ENCODE measurements at regions of chr3 and their contacts with region 1.

Region 1: GRCh38 chr3:123559040-123559861 is 25.6 kb downstream of the HACD2 start:
- DNase-seq: no peak
- ATAC-seq: peak; percentile 60
- H3K4me3 ChIP-seq: no peak overlapping the region
- H3K27ac ChIP-seq: no peak overlapping the region
- H3K4me1 ChIP-seq: no peaks in the 10 kb centered on the region
- H3K27me3 ChIP-seq: no peaks in the 10 kb centered on the region
- CTCF ChIP-seq: peak; percentile 63 to 78 (median 70); a peak in 5 of 6 replicates
- EP300 ChIP-seq: no peak
- POLR2A ChIP-seq: no peak
- RAD21 ChIP-seq: peak; percentile 83

Region 2: GRCh38 chr3:123449102-123449996 is 109.9 kb before region 1 on chr3:
- CTCF ChIA-PET with region 1: no interaction called
- POLR2A ChIA-PET with region 1: no interaction called
- RAD21 ChIA-PET with region 1: no interaction called
- SMC1A ChIA-PET with region 1: interaction called, 3 read pairs
- in situ Hi-C with region 1: no loop called
- intact Hi-C with region 1: loop called (anchors 5 kb)
- DNase-seq: no peak
- ATAC-seq: peak; percentile 40; the same call in 2 of the 3 replicates
- H3K4me3 ChIP-seq: peak overlapping the region; percentile 36; the same call in 1 of the 2 replicates
- H3K27ac ChIP-seq: no peak overlapping the region
- H3K4me1 ChIP-seq: no peaks in the 10 kb centered on the region
- H3K27me3 ChIP-seq: peaks cover 1 to 14% of the 10 kb centered on the region in 2 experiments
- CTCF ChIP-seq: no peak
- EP300 ChIP-seq: no peak
- POLR2A ChIP-seq: no peak
- RAD21 ChIP-seq: no peak

Region 3: DNA sequence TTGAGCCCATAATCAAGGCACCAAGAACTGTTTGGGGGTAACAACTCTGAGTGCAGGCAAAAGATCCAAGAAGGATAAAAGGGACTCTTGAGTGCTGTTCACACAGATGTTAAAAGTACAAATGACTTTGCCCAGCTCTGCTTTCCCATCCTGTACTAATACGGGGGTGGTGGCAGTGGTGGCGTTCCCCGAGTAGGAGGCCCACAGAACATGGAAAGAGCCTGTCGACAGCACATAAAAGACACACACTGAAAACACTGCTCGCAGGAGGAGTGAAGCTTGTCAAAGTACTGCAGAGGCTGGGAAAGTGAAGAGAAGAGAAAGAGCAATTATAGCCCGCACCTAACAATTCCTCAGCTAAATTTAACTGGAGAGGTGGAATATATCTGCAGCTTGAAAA is 15.3 kb before region 1 on chr3:
- CTCF ChIA-PET with region 1: interaction called, 23 read pairs
- POLR2A ChIA-PET with region 1: no interaction called
- RAD21 ChIA-PET with region 1: no interaction called
- SMC1A ChIA-PET with region 1: interaction called, 14 read pairs
- in situ Hi-C with region 1: no loop called
- intact Hi-C with region 1: no loop called
- DNase-seq: no peak
- ATAC-seq: no peak
- H3K4me3 ChIP-seq: no peak overlapping the region
- H3K27ac ChIP-seq: no peak overlapping the region
- H3K4me1 ChIP-seq: no peaks in the 10 kb centered on the region
- H3K27me3 ChIP-seq: no peaks in the 10 kb centered on the region
- CTCF ChIP-seq: no peak
- EP300 ChIP-seq: no peak
- POLR2A ChIP-seq: no peak
- RAD21 ChIP-seq: no peak

Region 4: DNA sequence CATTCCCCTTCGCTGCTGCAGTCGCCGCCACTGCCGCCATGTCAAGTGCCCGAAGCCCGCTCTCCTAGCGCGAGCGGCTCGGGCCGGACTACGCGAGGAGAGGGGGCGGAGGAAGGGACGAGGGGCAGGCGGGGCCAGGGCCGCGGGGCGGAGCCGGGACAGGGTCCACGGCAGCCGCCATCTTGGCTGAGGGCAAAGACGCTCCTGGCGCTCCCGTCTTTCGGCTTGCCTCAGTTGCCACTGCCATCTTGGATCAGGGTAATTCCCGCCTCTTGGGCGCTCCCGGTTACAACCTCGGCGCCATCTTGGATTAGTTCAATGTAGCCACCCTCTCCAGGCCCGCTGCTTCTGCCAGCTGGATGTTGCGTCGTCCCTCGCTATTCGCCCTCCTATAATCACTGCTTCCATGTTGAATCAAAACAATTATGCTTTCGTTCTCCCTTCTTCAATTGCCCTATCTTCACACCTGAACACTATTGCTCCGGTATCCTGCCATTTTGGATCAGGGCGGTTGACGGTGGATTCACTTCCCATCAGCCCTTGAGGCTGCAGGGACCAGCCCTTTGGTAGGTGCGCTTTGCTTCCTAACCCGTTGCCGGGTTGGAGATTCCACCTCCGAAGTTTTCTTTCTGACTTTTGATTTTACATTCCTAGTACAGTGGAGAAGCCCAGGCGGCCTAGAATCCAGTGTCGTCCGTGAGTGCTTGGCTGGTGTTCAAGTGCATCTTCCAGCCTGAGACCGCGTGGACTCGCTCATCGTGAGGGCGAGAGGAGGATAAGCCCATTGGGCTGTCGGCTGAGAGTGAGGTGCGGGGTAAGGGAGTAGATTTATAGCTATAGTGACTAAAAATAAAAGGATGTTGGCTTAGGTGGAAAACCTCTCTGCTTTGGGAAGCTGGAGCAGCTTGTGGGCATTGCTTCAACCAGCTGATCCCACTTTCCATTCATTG is 26.0 kb after region 1 on chr3 and contains the start of gene HACD2:
- CTCF ChIA-PET with region 1: interaction called, 21 read pairs
- POLR2A ChIA-PET with region 1: no interaction called
- RAD21 ChIA-PET with region 1: no interaction called
- SMC1A ChIA-PET with region 1: interaction called, 5 read pairs
- in situ Hi-C with region 1: no loop called
- intact Hi-C with region 1: no loop called
- DNase-seq: peak; percentile 90
- ATAC-seq: peak; percentile 95
- H3K4me3 ChIP-seq: peak within 1 kb of the TSS; percentile 86
- H3K27ac ChIP-seq: peak within 1 kb of the TSS; percentile 79
- H3K4me1 ChIP-seq: peaks cover 2% of the 10 kb centered on the region
- H3K27me3 ChIP-seq: no peaks in the 10 kb centered on the region
- CTCF ChIP-seq: no peak
- EP300 ChIP-seq: 0 out of 4 replicates have a peak, but pooled peaks of 1 of the 2 experiments have one; percentile 26
- POLR2A ChIP-seq: peak; percentile 87
- RAD21 ChIP-seq: no peak
- polyA plus RNA-seq, gene HACD2: 9.1 to 9.6 TPM

Measured in GM12878 (cell line).